ENCODE measurements at regions of chr2 and their contacts with region 1.

Region 1: DNA sequence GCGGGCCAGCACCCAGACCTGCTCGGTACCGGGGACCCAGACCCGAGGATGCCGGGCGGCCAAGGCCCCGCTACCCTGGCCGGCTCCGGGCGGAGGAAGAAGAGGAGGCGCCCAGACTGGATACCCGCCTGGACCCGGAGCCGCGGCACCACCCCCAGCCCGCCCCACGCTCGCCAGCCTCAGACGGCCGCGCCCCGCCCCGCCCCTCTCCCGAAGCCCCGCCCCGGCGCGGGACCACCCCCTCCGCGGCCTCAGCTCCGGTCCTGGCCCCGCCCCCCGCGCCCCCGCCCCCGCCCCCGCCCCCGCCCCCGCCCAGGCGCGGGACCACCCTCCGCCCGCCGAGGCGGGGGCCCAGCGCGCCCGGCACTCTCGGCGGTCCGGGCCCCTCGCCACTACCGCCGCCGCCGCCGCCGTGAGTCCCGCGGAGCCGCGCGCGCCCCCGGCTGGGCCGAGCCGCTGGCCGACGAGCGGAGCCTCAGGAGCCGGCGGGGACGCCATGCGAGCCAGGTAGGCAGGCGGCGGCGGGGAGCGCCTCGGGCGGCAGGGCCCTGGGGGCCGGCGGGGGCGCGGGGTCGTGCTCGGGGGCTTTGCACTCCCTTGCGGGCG is at the start of gene SH3BP4:
- H3K4me3 Mint-ChIP-seq: peak within 1 kb of the TSS; percentile 76
- H3K27ac Mint-ChIP-seq: peak within 1 kb of the TSS; percentile 48
- H3K4me1 Mint-ChIP-seq: peaks cover 30% of the 10 kb centered on the region
- H3K27me3 Mint-ChIP-seq: peaks cover 71% of the 10 kb centered on the region

Region 2: DNA sequence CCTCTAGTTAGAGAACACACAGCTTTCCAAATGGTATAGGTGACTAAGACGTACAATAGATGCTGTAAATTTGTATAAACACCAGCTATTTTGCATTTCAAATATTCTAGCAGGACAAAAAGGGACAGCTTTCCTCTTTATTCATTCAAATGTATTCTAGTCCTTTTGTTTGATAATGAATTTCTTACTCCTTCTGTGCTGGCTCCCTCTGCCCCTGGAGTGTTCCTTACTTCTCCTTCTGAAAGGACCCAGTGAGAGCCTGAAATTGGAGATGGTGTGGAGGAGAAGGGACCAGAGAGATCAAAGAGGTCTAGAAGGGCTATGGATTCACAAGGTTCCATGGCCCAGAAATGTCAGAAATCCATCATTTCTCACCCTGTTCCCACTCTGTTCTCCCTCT is 53.1 kb before region 1 on chr2:
- intact Hi-C with region 1: no loop called
- H3K4me3 Mint-ChIP-seq: no peak overlapping the region
- H3K27ac Mint-ChIP-seq: no peak overlapping the region
- H3K4me1 Mint-ChIP-seq: no peaks in the 10 kb centered on the region
- H3K27me3 Mint-ChIP-seq: no peaks in the 10 kb centered on the region

Region 3: GRCh38 chr2:234974501-234975385 is 23.0 kb after region 1 on chr2:
- intact Hi-C with region 1: no loop called
- H3K4me3 Mint-ChIP-seq: no peak overlapping the region
- H3K27ac Mint-ChIP-seq: no peak overlapping the region
- H3K4me1 Mint-ChIP-seq: peaks cover 17% of the 10 kb centered on the region
- H3K27me3 Mint-ChIP-seq: peaks cover 20% of the 10 kb centered on the region

Region 4: DNA sequence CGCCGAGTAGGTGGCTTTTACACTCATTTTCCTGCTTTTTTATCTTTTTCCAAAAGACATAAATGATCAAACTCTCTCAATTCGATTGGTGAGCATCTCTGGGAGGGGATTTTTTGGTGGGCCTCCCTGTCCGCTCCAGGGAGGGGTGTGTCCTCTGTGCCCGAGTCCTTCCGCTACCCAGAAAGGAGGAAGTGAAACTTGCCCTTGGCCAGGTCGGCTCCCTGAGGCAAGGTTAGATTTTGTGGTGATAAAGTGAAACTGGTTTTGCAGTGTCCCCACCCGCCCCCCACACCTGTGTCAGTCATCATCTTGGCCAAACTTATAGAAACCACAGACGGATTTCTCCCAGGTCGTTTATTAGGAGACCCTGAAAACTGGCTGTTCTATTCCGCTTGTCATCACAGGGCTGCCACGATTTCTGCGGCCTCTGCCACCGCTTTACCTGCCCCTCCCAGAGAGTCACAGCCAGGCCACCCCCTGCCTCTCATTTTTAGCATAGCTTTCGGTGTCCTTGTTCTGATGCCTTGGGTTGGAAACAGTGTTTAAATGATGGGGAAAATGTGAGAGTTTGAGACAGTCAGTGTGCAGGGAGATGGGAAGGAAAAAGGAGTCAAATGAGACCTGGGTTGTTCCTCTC is 93.7 kb after region 1 on chr2:
- intact Hi-C with region 1: loop called (anchors 5 kb)
- H3K4me3 Mint-ChIP-seq: peak overlapping the region; percentile 30
- H3K27ac Mint-ChIP-seq: peak overlapping the region; percentile 98
- H3K4me1 Mint-ChIP-seq: peaks cover 66% of the 10 kb centered on the region
- H3K27me3 Mint-ChIP-seq: peaks cover 3% of the 10 kb centered on the region

Measured in dendritic cell treated with granulocyte-macrophage colony-stimulating factor and Interleukin-4, amounts not matched to agents 40 ng/mL and 50 ng/mL, for 4 days (primary cell).